Left lung (tissue), 14 donors: ENCODE measurements at regions of chr6 and their contacts with region 1.

Region 1: DNA sequence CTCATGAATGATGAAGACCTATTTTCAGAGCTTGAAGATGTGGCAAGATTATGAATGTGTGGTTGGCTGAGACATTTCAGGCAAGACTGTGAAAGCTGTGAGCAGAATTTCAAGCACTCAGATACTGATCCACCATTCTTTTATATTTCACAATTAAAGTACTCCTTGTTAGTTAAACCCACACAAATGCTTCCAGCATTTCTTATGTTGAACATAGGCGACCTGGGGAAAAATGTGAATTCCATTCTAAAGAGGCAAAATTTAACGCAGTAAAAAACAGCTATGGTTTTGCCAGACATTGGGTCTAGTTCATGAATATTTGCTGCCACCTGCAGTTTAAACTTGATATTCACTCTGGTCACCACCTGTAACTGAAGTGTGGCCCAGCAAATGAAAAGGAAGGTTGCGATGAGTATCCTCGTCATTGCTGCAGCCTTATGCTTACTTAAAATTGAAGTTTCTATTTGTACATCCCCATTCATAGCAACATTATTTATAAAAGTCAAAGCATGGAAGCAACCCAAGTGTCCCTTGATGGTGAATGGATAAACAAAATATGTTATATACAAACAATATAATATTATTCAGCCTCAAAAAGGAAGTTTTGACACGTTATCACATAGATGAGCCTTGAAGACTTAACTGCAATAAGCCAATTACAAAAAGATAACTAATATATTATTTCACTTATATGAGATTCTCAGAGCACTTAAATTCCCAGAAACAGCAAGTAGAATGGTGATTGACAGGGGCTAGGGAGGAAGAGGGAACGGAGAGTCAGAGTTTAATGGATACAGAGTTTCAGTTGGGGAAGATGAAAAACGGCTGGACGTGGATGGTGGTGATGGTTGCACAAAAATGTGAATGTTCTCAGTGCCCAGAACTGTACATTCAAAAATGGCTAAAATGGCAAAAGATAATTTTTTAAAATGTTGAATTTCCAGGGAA is 32.4 kb upstream of the FAM184A start:
- DNase-seq: peak in 2 of 4 donors; percentile 50 to 73
- ATAC-seq: peak; percentile 94
- H3K4me3 ChIP-seq: no peak overlapping the region
- H3K27ac ChIP-seq: no peak overlapping the region
- H3K4me1 ChIP-seq: peaks cover 0 to 16% of the 10 kb centered on the region in 2 donors
- H3K27me3 ChIP-seq: no peaks in the 10 kb centered on the region
- CTCF ChIP-seq: peak; percentile 46 to 59

Region 2: GRCh38 chr6:118696271-118696670 is 414.6 kb before region 1 on chr6:
- intact Hi-C with region 1: no loop called
- DNase-seq: no peak
- ATAC-seq: no peak
- H3K4me3 ChIP-seq: no peak overlapping the region
- H3K27ac ChIP-seq: no peak overlapping the region
- H3K4me1 ChIP-seq: no peaks in the 10 kb centered on the region
- H3K27me3 ChIP-seq: no peaks in the 10 kb centered on the region
- CTCF ChIP-seq: no peak

Region 3: DNA sequence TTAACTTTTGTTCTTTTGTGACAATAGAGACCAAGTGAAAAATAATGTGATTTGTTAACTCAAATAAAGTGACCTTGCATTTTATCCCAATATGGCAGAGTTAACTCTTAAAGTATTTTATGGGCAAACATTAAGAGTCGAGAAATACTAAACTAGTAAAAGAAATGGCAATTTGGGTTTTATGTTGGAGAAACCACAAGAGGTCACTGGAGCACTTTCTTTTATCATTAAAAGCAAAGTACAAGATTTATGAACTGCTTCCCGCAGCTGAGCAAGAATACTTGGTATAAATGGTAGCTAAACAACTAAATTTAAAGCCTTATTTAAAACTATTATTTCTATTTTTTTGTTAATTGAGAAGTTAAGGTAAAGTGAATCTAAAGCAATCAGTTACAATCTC is 142.5 kb before region 1 on chr6:
- intact Hi-C with region 1: loop called in 1 of 2 experiments (anchors 5 kb)
- DNase-seq: peak in 2 of 4 donors; percentile 36 to 56
- ATAC-seq: peak; percentile 47
- H3K4me3 ChIP-seq: no peak overlapping the region
- H3K27ac ChIP-seq: no peak overlapping the region
- H3K4me1 ChIP-seq: no peaks in the 10 kb centered on the region
- H3K27me3 ChIP-seq: no peaks in the 10 kb centered on the region
- CTCF ChIP-seq: no peak

Region 4: GRCh38 chr6:118993803-118994251 is 117.0 kb before region 1 on chr6:
- intact Hi-C with region 1: no loop called
- DNase-seq: no peak
- ATAC-seq: no peak
- H3K4me3 ChIP-seq: no peak overlapping the region
- H3K27ac ChIP-seq: no peak overlapping the region
- H3K4me1 ChIP-seq: no peaks in the 10 kb centered on the region
- H3K27me3 ChIP-seq: no peaks in the 10 kb centered on the region
- CTCF ChIP-seq: no peak

Region 5: DNA sequence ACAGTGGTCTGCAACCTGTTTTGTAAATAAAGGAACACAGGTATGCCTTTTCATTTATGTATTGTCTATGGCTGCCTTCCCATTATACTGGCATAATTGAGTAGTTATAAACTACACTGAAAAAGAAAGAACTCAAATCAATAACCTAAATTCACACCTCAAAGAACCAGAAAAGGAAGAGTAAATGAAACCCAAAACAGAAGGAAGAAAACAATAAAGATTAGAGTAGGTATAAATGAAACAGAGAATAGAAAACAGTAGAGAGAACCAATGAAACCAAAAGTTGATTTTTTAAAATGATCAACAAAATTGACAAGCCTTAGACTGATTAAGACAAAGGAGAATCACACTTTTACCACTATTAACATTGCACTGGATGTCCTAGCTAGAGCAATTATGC is 67.1 kb before region 1 on chr6:
- intact Hi-C with region 1: no loop called
- DNase-seq: no peak
- ATAC-seq: no peak
- H3K4me3 ChIP-seq: no peak overlapping the region
- H3K27ac ChIP-seq: no peak overlapping the region
- H3K4me1 ChIP-seq: peaks cover 0 to 4% of the 10 kb centered on the region in 2 donors
- H3K27me3 ChIP-seq: no peaks in the 10 kb centered on the region
- CTCF ChIP-seq: no peak